ENCODE measurements at regions of chr9 and their contacts with region 1.

Region 1: GRCh38 chr9:132141344-132141947 is 20.4 kb upstream of the NTNG2 start:
- DNase-seq: no peak
- H3K4me3 ChIP-seq: no peak overlapping the region
- H3K27ac ChIP-seq: no peak overlapping the region
- H3K4me1 ChIP-seq: peaks cover 0 to 7% (median 3%) of the 10 kb centered on the region in 4 donors
- H3K27me3 ChIP-seq: peaks cover 83% of the 10 kb centered on the region
- CTCF ChIP-seq: no peak
- EP300 ChIP-seq: no peak
- POLR2A ChIP-seq: no peak

Region 2: DNA sequence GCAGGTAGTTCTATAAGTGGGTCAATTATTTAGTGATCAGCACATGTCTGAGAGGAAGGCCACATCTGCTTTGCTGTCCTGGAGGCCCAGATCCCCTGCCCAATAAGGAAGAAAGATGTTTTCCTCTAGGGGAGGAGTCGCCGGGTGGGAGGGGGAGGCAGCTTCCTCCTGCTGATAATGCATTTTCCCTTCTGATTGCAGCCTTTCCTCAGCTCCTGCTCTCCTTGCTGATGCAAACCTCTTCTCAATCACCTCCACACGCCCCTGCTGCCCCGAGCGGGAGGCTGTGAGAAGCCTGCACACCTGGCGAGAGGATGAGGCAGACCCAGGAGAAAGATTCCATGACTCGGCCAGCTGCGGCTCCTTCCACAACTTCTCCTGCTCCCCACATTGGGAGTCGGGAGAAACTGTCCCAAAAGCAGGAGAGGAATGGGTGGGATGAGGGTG is 13.4 kb after region 1 on chr9:
- in situ Hi-C with region 1: no loop called
- intact Hi-C with region 1: no loop called
- DNase-seq: no peak
- H3K4me3 ChIP-seq: no peak overlapping the region
- H3K27ac ChIP-seq: no peak overlapping the region
- H3K4me1 ChIP-seq: no peaks in the 10 kb centered on the region
- H3K27me3 ChIP-seq: peaks cover 77% of the 10 kb centered on the region
- CTCF ChIP-seq: no peak
- EP300 ChIP-seq: no peak
- POLR2A ChIP-seq: no peak

Region 3: DNA sequence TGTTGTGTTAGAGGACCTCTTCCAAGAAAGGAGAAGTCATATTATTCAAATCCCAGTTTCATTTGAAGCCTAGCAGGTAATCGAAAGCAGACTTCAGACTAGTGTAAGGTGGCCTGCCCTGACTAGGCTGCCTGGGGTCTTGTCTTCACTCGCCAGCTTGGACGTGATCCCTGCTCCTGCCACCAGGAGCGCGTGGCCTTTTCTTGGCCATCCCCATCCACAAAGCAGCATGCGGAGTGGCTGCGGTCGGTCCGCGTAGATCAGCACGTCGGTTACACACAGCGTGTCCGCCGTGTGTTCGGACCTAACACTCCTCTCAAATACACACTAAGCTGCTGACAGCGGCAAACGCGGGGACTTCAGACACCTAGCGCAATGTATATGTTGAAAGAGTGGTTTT is 305.9 kb after region 1 on chr9:
- in situ Hi-C with region 1: loop called in 1 of 4 experiments (anchors 25 kb)
- intact Hi-C with region 1: no loop called
- DNase-seq: no peak
- H3K4me3 ChIP-seq: no peak overlapping the region
- H3K27ac ChIP-seq: no peak overlapping the region
- H3K4me1 ChIP-seq: no peaks in the 10 kb centered on the region
- H3K27me3 ChIP-seq: peaks cover 43% of the 10 kb centered on the region
- CTCF ChIP-seq: no peak
- EP300 ChIP-seq: no peak
- POLR2A ChIP-seq: no peak